Endothelial cell of umbilical vein (primary cell): ENCODE measurements at regions of chr11 and their contacts with region 1.

Region 1: GRCh38 chr11:61187505-61188130 is 15.7 kb upstream of the PGA3 start:
- DNase-seq: peak; percentile 81
- H3K4me3 ChIP-seq: no peak overlapping the region
- H3K27ac ChIP-seq: no peak overlapping the region
- H3K4me1 ChIP-seq: no peaks in the 10 kb centered on the region
- H3K27me3 ChIP-seq: no peaks in the 10 kb centered on the region
- CTCF ChIP-seq: peak; percentile 84 to 90
- POLR2A ChIP-seq: no peak

Region 2: DNA sequence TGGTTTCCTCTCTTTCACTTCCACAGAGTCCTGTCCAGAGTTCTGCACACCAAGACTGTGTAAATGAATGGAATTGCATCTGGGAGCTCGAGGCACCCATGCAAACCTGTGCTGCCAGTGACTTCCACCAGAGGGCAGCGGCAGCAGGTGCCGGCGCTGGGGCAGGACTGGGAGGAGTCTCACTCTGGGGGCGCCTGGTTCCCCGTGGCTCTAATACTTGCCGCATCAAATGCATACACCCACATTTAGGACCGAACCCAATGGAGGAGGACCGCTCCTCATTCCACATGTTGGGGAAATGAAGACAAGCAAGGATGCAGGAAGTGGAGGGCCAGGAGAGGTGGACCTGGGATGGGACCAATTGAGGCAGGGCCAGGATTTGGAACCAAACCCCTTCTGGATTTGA is 217.2 kb before region 1 on chr11:
- CTCF ChIA-PET with region 1: interaction called, 3 read pairs
- POLR2A ChIA-PET with region 1: no interaction called
- dilution Hi-C with region 1: no loop called
- intact Hi-C with region 1: loop called (anchors 1 kb)
- DNase-seq: peak; percentile 36
- H3K4me3 ChIP-seq: no peak overlapping the region
- H3K27ac ChIP-seq: no peak overlapping the region
- H3K4me1 ChIP-seq: no peaks in the 10 kb centered on the region
- H3K27me3 ChIP-seq: peaks cover 3 to 8% of the 10 kb centered on the region in 2 experiments
- CTCF ChIP-seq: peak; percentile 82
- POLR2A ChIP-seq: no peak

Region 3: GRCh38 chr11:61161190-61162091 is 26.2 kb before region 1 on chr11 and contains the start of gene VPS37C:
- CTCF ChIA-PET with region 1: no interaction called
- POLR2A ChIA-PET with region 1: no interaction called
- dilution Hi-C with region 1: no loop called
- intact Hi-C with region 1: loop called (anchors 1 kb)
- DNase-seq: peak; percentile 85
- H3K4me3 ChIP-seq: peak within 1 kb of the TSS; percentile 37 to 86 (median 73)
- H3K27ac ChIP-seq: peak within 1 kb of the TSS; percentile 71
- H3K4me1 ChIP-seq: peaks cover 30% of the 10 kb centered on the region
- H3K27me3 ChIP-seq: no peaks in the 10 kb centered on the region
- CTCF ChIP-seq: no peak
- POLR2A ChIP-seq: peak; percentile 73
- total RNA-seq, gene VPS37C: 23.4 and 24.2 TPM in 2 replicates